GM13976 (cell line): ENCODE measurements at regions of chr22 and their contacts with region 1.

Region 1: GRCh38 chr22:19398206-19398605 is 33.3 kb downstream of the HIRA start:
- DNase-seq: no peak
- CTCF ChIP-seq: no peak

Region 2: GRCh38 chr22:18987765-18988164 is 410.4 kb before region 1 on chr22:
- in situ Hi-C with region 1: loop called (anchors 25 kb)
- DNase-seq: peak; percentile 45
- CTCF ChIP-seq: no peak

Region 3: DNA sequence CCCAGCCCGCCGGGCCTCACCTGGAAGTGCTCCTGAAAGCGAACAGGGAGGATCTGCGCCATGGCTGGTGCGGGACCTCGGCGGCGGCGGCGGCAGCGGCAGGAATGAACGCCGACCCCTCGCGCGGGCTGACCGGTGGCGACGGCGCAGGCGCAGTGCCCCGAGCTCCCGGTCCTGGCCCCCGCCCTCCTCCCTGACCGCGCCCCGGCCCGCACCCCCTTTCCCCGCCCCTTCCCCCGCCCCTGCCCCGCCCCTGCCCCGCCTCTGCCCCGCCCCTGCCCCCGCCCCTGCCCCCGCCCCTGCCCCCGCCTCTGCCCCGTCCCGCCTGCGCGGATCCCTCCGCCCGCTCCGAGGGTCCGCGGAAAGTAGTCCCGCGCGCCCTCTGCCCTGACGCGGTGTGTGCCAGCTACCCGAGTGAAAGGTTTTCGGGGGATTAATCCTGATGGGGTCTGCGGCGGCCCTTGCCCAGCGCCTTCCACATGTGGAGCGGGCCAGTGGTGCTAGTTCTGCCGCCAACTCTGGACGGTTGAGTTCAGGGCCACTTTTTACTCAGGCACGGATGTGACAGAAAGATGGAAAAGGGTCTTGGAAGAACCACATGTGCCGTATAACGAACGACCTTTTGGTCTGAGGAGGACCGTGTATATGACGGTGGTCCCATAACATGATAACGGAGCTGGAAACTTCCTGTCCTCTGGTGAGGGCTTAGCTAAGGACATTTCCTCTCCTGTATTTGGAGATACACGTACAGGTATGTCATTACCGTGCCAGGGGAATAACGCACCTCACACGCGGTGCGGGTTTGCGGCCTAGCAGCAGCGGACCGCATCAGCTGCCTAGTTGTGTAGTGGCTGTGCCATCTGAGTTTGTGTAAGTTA is 106.4 kb before region 1 on chr22 and contains the start of gene CLTCL1:
- in situ Hi-C with region 1: loop called (anchors 25 kb)
- DNase-seq: peak; percentile 99
- CTCF ChIP-seq: no peak

Region 4: DNA sequence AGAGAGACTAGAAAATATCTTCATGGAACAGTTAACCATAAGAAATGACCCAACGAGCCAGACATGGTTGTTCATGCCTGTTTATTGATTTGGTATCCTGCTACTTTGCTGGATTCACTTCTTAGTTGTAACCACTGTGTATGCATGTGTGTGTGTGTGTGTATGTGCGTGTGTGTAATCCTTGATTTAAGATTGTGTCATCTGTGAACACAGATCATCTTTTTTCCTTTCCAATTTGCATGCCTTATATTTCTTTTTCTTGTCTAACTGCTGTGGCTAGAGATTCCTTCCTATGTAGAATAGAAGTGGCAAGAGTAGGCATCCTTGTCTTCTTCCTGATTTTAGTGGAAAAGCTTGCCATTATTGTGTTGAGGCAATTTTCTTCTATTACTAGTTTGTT is 90.3 kb before region 1 on chr22:
- in situ Hi-C with region 1: no loop called
- DNase-seq: no peak
- CTCF ChIP-seq: no peak

Region 5: GRCh38 chr22:19705181-19705934 is 307.2 kb after region 1 on chr22:
- in situ Hi-C with region 1: no loop called
- DNase-seq: no peak
- CTCF ChIP-seq: no peak